ENCODE measurements at regions of chr6 and their contacts with region 1.

Region 1: DNA sequence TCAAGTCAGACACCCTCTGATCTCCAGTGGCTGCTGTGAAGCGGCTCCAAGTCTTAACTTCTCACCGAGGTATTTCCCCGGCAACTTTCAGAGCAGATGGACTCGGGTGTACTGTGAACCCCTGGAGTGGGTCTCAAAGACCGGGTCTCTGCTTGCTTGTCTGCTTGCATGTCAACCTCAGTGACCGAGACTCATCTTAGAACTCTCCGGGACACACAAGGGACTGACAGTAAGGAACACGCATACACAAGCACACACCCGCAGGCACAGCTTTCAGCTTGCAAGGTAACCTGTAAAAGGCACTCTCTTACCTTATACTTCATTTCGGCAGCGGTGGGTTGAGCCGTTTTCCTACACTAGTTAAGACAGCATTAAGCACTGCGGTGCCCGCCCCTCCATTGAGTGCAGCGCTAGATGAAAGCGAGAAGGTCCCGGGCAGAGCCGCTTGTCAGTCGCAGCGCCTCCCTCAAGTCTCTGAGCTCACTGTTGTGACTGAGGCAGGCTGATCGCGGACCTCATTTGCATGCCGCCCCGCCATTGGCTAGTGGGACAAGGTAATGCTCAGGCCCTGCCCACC is at the start of gene NEDD9:
- DNase-seq: peak; percentile 98
- H3K4me3 ChIP-seq: peak within 1 kb of the TSS; percentile 69 to 93 (median 70)
- H3K27ac ChIP-seq: peak within 1 kb of the TSS; percentile 93
- H3K4me1 ChIP-seq: peaks cover 36% of the 10 kb centered on the region
- H3K27me3 ChIP-seq: no peaks in the 10 kb centered on the region
- CTCF ChIP-seq: no peak
- POLR2A ChIP-seq: peak; percentile 98
- total RNA-seq, gene NEDD9: 55.2 and 73.0 TPM in 2 replicates

Region 2: DNA sequence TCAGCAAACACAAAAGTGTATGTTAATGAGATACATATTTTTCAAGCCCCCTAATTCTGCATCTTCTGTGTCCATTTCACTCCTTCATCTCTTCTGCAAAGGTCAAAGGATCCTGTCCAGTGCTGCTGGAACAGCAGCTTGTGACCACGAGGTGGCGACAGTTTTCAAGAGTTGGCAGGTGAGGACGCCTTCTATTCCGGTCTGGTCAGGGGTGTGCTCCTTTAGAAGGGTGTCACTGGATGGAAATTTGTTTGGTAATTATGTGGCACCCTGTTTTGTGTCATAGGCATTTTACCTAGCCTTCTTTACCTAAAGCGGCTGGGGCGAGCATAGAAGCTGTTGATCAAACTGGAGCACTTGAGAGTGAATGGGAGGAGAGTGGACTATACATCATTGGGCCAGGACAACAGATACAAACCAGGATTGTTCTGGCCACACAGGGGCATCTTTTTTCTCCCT is 87.9 kb before region 1 on chr6:
- CTCF ChIA-PET with region 1: interaction called, 11 read pairs
- POLR2A ChIA-PET with region 1: no interaction called
- dilution Hi-C with region 1: no loop called
- intact Hi-C with region 1: loop called (anchors 1 kb)
- DNase-seq: peak; percentile 70
- H3K4me3 ChIP-seq: no peak overlapping the region
- H3K27ac ChIP-seq: no peak overlapping the region
- H3K4me1 ChIP-seq: no peaks in the 10 kb centered on the region
- H3K27me3 ChIP-seq: no peaks in the 10 kb centered on the region
- CTCF ChIP-seq: peak; percentile 86 to 95
- POLR2A ChIP-seq: no peak

Region 3: GRCh38 chr6:11207199-11207968 is 24.9 kb before region 1 on chr6:
- CTCF ChIA-PET with region 1: interaction called, 7 read pairs
- POLR2A ChIA-PET with region 1: interaction called, 19 read pairs
- dilution Hi-C with region 1: no loop called
- intact Hi-C with region 1: loop called (anchors 1 kb)
- DNase-seq: peak; percentile 96
- H3K4me3 ChIP-seq: no peak overlapping the region
- H3K27ac ChIP-seq: peak overlapping the region; percentile 95
- H3K4me1 ChIP-seq: peaks cover 69% of the 10 kb centered on the region
- H3K27me3 ChIP-seq: no peaks in the 10 kb centered on the region
- CTCF ChIP-seq: no peak
- POLR2A ChIP-seq: peak; percentile 43

Region 4: DNA sequence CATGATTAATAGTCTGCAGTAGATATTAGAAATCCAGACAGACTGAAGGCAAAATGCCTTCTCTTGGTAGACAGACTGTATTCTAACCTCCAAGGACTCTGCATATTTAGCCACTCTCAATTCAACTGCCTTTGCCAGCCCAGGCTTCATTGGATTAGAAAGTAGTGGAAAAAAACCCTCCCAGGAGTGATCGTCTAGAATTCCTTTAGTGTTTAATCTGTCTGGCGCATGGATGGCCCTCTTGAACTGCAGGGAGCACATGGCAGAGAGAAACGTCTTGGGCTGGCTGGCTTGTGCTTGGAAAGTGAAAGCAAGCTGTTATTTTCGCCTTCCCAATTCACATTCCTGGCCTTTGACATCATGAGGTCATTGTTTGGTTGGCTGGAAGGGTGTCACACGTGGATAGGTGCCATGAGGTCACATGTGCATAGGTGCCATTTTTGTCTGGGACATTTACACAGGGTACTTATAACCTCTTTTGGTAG is 31.1 kb after region 1 on chr6:
- CTCF ChIA-PET with region 1: interaction called, 4 read pairs
- POLR2A ChIA-PET with region 1: interaction called, 3 read pairs
- dilution Hi-C with region 1: no loop called
- intact Hi-C with region 1: loop called (anchors 2 kb)
- DNase-seq: peak; percentile 86
- H3K4me3 ChIP-seq: no peak overlapping the region
- H3K27ac ChIP-seq: peak overlapping the region; percentile 67
- H3K4me1 ChIP-seq: peaks cover 19% of the 10 kb centered on the region
- H3K27me3 ChIP-seq: no peaks in the 10 kb centered on the region
- CTCF ChIP-seq: no peak
- POLR2A ChIP-seq: no peak

Region 5: GRCh38 chr6:11366183-11366933 is 134.1 kb after region 1 on chr6:
- CTCF ChIA-PET with region 1: no interaction called
- POLR2A ChIA-PET with region 1: interaction called, 4 read pairs
- dilution Hi-C with region 1: no loop called
- intact Hi-C with region 1: loop called (anchors 1 kb)
- DNase-seq: peak; percentile 11
- H3K4me3 ChIP-seq: no peak overlapping the region
- H3K27ac ChIP-seq: peak overlapping the region; percentile 58
- H3K4me1 ChIP-seq: peaks cover 51% of the 10 kb centered on the region
- H3K27me3 ChIP-seq: no peaks in the 10 kb centered on the region
- CTCF ChIP-seq: no peak
- POLR2A ChIP-seq: no peak

Region 6: GRCh38 chr6:12791371-12792000 is 1559.2 kb after region 1 on chr6:
- CTCF ChIA-PET with region 1: no interaction called
- POLR2A ChIA-PET with region 1: no interaction called
- dilution Hi-C with region 1: no loop called
- intact Hi-C with region 1: no loop called
- DNase-seq: no peak
- H3K4me3 ChIP-seq: no peak overlapping the region
- H3K27ac ChIP-seq: no peak overlapping the region
- H3K4me1 ChIP-seq: no peaks in the 10 kb centered on the region
- H3K27me3 ChIP-seq: no peaks in the 10 kb centered on the region
- CTCF ChIP-seq: no peak
- POLR2A ChIP-seq: no peak